ENCODE measurements at regions of chr4 and their contacts with region 1.

Region 1: GRCh38 chr4:94207469-94208224 is at the start of gene SMARCAD1:
- DNase-seq: peak; percentile 85
- H3K4me3 Mint-ChIP-seq: peak within 1 kb of the TSS; percentile 96
- H3K27ac Mint-ChIP-seq: peak within 1 kb of the TSS; percentile 100
- H3K4me1 Mint-ChIP-seq: peaks cover 25% of the 10 kb centered on the region
- H3K27me3 Mint-ChIP-seq: no peaks in the 10 kb centered on the region
- total RNA-seq, gene SMARCAD1: 38.9 and 41.8 TPM in 2 replicates

Region 2: DNA sequence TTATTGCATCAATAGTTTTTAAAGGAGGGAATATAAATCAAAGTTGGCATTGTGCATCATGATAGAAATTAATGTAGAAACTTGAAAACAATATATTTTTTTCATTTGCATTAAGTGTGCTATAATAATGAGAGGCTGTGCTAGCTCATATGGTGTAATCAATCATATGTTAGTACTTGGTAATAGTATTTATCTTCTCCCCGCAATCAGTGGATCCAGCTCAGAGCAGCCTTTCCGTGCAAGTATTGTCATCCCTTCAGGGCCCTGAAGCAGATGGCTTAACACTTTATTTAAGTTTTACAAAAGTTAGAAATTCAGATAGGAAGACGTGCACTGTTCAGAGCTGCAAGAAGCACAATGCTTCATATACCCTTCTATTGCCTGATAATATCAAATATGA is 995.4 kb before region 1 on chr4:
- intact Hi-C with region 1: no loop called
- DNase-seq: no peak
- H3K4me3 Mint-ChIP-seq: no peak overlapping the region
- H3K27ac Mint-ChIP-seq: no peak overlapping the region
- H3K4me1 Mint-ChIP-seq: no peaks in the 10 kb centered on the region
- H3K27me3 Mint-ChIP-seq: no peaks in the 10 kb centered on the region

Region 3: GRCh38 chr4:94171616-94172015 is 36.0 kb before region 1 on chr4:
- intact Hi-C with region 1: no loop called
- DNase-seq: no peak
- H3K4me3 Mint-ChIP-seq: no peak overlapping the region
- H3K27ac Mint-ChIP-seq: no peak overlapping the region
- H3K4me1 Mint-ChIP-seq: no peaks in the 10 kb centered on the region
- H3K27me3 Mint-ChIP-seq: no peaks in the 10 kb centered on the region

Region 4: GRCh38 chr4:94256828-94257227 is 49.2 kb after region 1 on chr4:
- intact Hi-C with region 1: loop called (anchors 5 kb)
- DNase-seq: no peak
- H3K4me3 Mint-ChIP-seq: no peak overlapping the region
- H3K27ac Mint-ChIP-seq: no peak overlapping the region
- H3K4me1 Mint-ChIP-seq: peaks cover 4% of the 10 kb centered on the region
- H3K27me3 Mint-ChIP-seq: no peaks in the 10 kb centered on the region

Region 5: GRCh38 chr4:94451695-94452475 is 244.2 kb after region 1 on chr4 and contains the start of gene PDLIM5:
- intact Hi-C with region 1: loop called (anchors 5 kb)
- DNase-seq: peak; percentile 86
- H3K4me3 Mint-ChIP-seq: peak within 1 kb of the TSS; percentile 86
- H3K27ac Mint-ChIP-seq: peak within 1 kb of the TSS; percentile 53
- H3K4me1 Mint-ChIP-seq: peaks cover 18% of the 10 kb centered on the region
- H3K27me3 Mint-ChIP-seq: peaks cover 36% of the 10 kb centered on the region
- total RNA-seq, gene PDLIM5: 24.2 and 25.1 TPM in 2 replicates

Measured in activated T-helper 2 cell treated with anti-CD3 and anti-CD28 coated beads, Interferon-gamma antibody, Interleukin-2, Interleukin-4, amounts not matched to agents 10 μg/mL and 5 μg/mL and 100 μg/mL, durations not matched to agents 14 hours and 24 hours and 36 hours (primary cell).